ENCODE measurements at regions of chr6 and their contacts with region 1.

Region 1: GRCh38 chr6:167141667-167142432 is 15.9 kb downstream of the GPR31 start:
- DNase-seq: peak; percentile 72
- ATAC-seq: peak; percentile 90

Region 2: GRCh38 chr6:165659945-165660862 is 1481.6 kb before region 1 on chr6:
- intact Hi-C with region 1: no loop called
- DNase-seq: peak; percentile 62
- ATAC-seq: peak; percentile 15

Region 3: GRCh38 chr6:166786704-166787293 is 355.1 kb before region 1 on chr6:
- intact Hi-C with region 1: loop called (anchors 10 kb)
- DNase-seq: no peak
- ATAC-seq: peak; percentile 37

Region 4: GRCh38 chr6:167079853-167080297 is 62.0 kb before region 1 on chr6:
- intact Hi-C with region 1: no loop called
- DNase-seq: no peak
- ATAC-seq: no peak